ENCODE measurements at regions of chr6 and their contacts with region 1.

Region 1: DNA sequence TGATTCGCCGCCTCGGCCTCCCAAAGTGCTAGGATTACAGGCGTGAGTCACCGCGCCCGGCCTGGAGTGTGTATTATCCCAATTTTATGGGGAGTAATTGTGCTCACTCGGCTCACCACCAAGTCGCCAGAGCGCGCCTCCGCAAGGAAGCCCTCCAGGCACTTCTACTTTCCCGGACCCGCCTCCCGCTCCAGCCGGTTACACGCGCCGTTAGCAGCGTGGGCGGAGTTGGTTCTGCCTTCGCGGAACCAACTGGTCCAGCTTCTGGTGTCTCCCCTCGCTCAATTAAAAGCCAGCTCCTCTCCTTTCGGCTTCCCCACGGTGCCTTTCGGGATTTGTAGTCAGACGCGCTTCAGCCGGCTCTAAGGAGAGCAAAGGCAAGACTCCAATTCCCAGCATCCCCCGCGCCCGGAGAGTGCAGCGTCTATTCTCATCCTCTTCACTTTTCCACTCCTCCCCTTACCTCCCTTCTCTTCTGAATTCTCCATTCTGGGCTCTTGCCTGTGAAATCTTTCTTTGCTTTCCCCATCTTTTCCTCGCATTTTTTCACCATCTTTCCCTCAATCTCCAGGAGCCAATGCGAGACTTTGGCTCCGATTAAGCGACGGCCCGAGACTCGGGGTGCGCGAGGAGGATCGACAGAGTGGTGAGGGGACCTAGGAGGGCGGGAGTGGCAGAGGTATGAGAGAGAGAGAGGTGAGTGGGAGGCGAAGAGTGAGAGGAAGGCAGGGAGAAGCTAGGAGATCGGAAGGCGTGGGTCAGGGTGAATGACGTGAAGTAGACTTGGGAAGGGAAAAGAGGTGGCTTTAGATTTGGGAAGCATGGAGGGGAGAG is at the start of gene GTF2H4:
- DNase-seq: peak; percentile 89 to 97 (median 95)
- ATAC-seq: peak; percentile 99
- H3K4me3 ChIP-seq: peak within 1 kb of the TSS; percentile 84 to 94
- H3K4me3 Mint-ChIP-seq: peak within 1 kb of the TSS; percentile 100
- H3K27ac ChIP-seq: peak within 1 kb of the TSS; percentile 34 to 54
- H3K27ac Mint-ChIP-seq: peak within 1 kb of the TSS; percentile 83
- H3K4me1 ChIP-seq: peaks cover 11% of the 10 kb centered on the region
- H3K4me1 Mint-ChIP-seq: peaks cover 25% of the 10 kb centered on the region
- H3K27me3 ChIP-seq: no peaks in the 10 kb centered on the region
- H3K27me3 Mint-ChIP-seq: no peaks in the 10 kb centered on the region
- CTCF ChIP-seq: no peak
- total RNA-seq, gene GTF2H4: 7.0 to 7.5 TPM

Region 2: GRCh38 chr6:30686908-30687658 is 220.9 kb before region 1 on chr6:
- CTCF ChIA-PET with region 1: no interaction called
- POLR2A ChIA-PET with region 1: interaction called, 3 read pairs
- intact Hi-C with region 1: loop called in 1 of 2 experiments (anchors 10 kb)
- DNase-seq: peak in 8 of 9 experiments; percentile 47 to 79 (median 68)
- ATAC-seq: peak; percentile 21
- H3K4me3 ChIP-seq: peak overlapping the region; percentile 86 to 95
- H3K4me3 Mint-ChIP-seq: peak overlapping the region; percentile 99
- H3K27ac ChIP-seq: peak overlapping the region; percentile 75 to 94
- H3K27ac Mint-ChIP-seq: peak overlapping the region; percentile 95
- H3K4me1 ChIP-seq: peaks cover 31% of the 10 kb centered on the region
- H3K4me1 Mint-ChIP-seq: peaks cover 54% of the 10 kb centered on the region
- H3K27me3 ChIP-seq: no peaks in the 10 kb centered on the region
- H3K27me3 Mint-ChIP-seq: no peaks in the 10 kb centered on the region
- CTCF ChIP-seq: no peak

Region 3: GRCh38 chr6:30883685-30884520 is 24.1 kb before region 1 on chr6 and contains the start of gene DDR1:
- CTCF ChIA-PET with region 1: interaction called, 4 read pairs
- POLR2A ChIA-PET with region 1: interaction called, 5 read pairs
- intact Hi-C with region 1: loop called in 1 of 2 experiments (anchors 2 kb)
- DNase-seq: peak in 8 of 9 experiments; percentile 25 to 73 (median 52)
- ATAC-seq: peak; percentile 60
- H3K4me3 ChIP-seq: peak within 1 kb of the TSS; percentile 44 to 55
- H3K4me3 Mint-ChIP-seq: peak within 1 kb of the TSS; percentile 82
- H3K27ac ChIP-seq: peak within 1 kb of the TSS in 1 of 2 experiments; percentile 7
- H3K27ac Mint-ChIP-seq: peak within 1 kb of the TSS; percentile 86
- H3K4me1 ChIP-seq: peaks cover 38% of the 10 kb centered on the region
- H3K4me1 Mint-ChIP-seq: peaks cover 38% of the 10 kb centered on the region
- H3K27me3 ChIP-seq: no peaks in the 10 kb centered on the region
- H3K27me3 Mint-ChIP-seq: no peaks in the 10 kb centered on the region
- CTCF ChIP-seq: no peak
- total RNA-seq, gene DDR1: 5.9 to 8.0 TPM

Region 4: DNA sequence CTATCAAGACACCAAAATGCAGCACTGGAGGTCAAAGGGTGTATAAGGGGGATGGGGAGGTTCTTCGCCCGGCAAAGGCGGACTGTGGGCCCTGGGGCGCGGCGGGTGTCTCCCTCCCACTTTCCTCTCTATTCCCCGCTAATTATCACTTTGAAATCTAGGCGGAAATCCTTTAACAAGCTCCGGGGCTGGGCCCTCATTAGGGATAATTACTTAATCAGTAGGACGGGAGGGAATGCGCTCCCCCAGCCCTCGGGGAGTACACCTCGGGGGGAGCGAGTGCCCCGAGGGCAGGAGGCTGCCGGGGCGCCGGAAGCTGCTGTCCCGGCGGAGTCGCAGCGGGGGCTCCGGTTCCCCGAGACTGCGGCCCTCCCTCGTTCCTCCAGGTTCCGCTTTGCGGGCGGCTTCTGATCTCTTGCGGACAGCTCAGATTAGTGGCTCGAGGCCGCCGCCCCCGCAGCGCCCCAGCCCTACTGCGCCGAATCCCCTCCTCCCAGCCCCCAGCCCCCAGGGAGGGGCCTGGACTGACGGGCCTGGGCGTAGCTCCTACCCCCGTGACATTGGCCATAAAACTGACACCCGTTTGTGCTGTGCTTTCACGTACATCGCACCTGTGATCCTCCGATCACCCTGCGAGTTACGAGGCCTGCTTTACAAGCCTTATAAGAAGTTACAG is 47.5 kb after region 1 on chr6:
- CTCF ChIA-PET with region 1: no interaction called
- POLR2A ChIA-PET with region 1: interaction called, 7 read pairs
- intact Hi-C with region 1: loop called in 1 of 2 experiments (anchors 1 kb)
- DNase-seq: peak; percentile 46 to 88 (median 69)
- ATAC-seq: peak; percentile 84
- H3K4me3 ChIP-seq: peak overlapping the region; percentile 58 to 63
- H3K4me3 Mint-ChIP-seq: peak overlapping the region; percentile 86
- H3K27ac ChIP-seq: peak overlapping the region; percentile 31 to 80
- H3K27ac Mint-ChIP-seq: peak overlapping the region; percentile 84
- H3K4me1 ChIP-seq: peaks cover 17% of the 10 kb centered on the region
- H3K4me1 Mint-ChIP-seq: peaks cover 19% of the 10 kb centered on the region
- H3K27me3 ChIP-seq: peaks cover 0 to 3% of the 10 kb centered on the region in 2 experiments
- H3K27me3 Mint-ChIP-seq: peaks cover 24% of the 10 kb centered on the region
- CTCF ChIP-seq: no peak

Region 5: DNA sequence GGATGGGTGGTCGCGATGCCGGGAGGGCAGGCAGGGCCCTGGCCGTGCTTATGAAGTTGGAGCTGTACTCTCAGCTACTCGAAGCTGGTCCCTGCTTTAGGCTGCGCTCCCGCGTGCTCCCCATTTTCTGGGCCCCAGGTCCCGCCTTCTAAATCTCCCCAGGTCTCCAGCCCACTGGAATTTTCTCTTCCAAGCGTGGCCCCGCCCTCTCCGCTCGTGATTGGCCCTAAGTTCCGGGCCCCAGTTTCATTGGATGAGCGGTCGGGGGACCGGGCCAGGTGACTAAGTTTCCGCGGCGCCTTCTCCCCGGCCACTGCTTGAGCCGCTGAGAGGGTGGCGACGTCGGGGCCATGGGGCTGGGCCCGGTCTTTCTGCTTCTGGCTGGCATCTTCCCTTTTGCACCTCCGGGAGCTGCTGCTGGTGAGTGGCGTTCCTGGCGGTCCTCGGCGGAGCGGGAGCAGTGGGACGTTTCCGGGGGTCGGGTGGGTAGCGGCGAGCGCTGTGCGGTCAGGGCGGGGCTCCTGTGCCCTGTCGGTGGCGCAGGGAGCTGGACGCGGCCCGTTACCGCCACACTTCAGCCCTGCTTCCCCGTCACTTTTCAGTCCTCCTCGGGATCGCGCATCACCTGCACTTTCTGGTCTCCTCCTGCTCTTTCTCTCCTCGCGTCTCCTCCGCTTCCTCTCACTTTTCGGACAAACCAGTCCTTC is 495.5 kb after region 1 on chr6 and contains the start of gene MICA:
- CTCF ChIA-PET with region 1: no interaction called
- POLR2A ChIA-PET with region 1: no interaction called
- intact Hi-C with region 1: loop called in 1 of 2 experiments (anchors 10 kb)
- DNase-seq: peak in 8 of 9 experiments; percentile 46 to 85 (median 70)
- ATAC-seq: peak; percentile 50
- H3K4me3 ChIP-seq: peak within 1 kb of the TSS; percentile 67
- H3K4me3 Mint-ChIP-seq: peak within 1 kb of the TSS; percentile 94
- H3K27ac ChIP-seq: peak within 1 kb of the TSS; percentile 18 to 85
- H3K27ac Mint-ChIP-seq: peak within 1 kb of the TSS; percentile 92
- H3K4me1 ChIP-seq: peaks cover 34% of the 10 kb centered on the region
- H3K4me1 Mint-ChIP-seq: peaks cover 69% of the 10 kb centered on the region
- H3K27me3 ChIP-seq: no peaks in the 10 kb centered on the region
- H3K27me3 Mint-ChIP-seq: no peaks in the 10 kb centered on the region
- CTCF ChIP-seq: no peak
- total RNA-seq, gene MICA: 5.8 to 6.2 TPM

Measured in CD8-positive, alpha-beta T cell (primary cell).